ENCODE measurements at regions of chrX and their contacts with region 1.

Region 1: GRCh38 chrX:11698702-11699101 is 33.0 kb upstream of the ARHGAP6 start:
- DNase-seq: no peak
- ATAC-seq: no peak
- H3K4me3 ChIP-seq: no peak overlapping the region
- H3K27ac ChIP-seq: no peak overlapping the region
- H3K4me1 ChIP-seq: no peaks in the 10 kb centered on the region
- H3K27me3 ChIP-seq: no peaks in the 10 kb centered on the region
- CTCF ChIP-seq: no peak
- EP300 ChIP-seq: no peak
- POLR2A ChIP-seq: no peak
- RAD21 ChIP-seq: no peak

Region 2: DNA sequence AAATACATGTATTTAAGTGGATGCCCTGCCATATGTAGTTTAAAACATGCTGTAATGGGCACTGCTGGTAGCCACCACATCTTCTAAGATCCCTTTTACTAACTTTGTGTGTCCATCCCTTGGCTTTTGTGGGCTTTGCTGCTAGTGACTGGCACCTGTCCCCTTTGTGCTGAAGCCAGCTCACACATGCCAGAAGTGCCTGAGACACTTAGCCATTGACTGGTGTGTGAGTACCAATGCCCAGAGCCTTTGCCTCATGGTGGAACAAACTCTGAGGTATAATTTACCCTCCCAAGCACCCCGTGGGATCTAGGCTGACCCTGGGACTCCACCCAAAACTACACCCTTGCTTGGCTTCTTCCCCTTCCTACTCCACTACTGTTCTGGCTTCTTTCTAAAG is 66.0 kb before region 1 on chrX:
- CTCF ChIA-PET with region 1: no interaction called
- POLR2A ChIA-PET with region 1: no interaction called
- in situ Hi-C with region 1: no loop called
- intact Hi-C with region 1: loop called (anchors 2 kb)
- DNase-seq: no peak
- ATAC-seq: no peak
- H3K4me3 ChIP-seq: no peak overlapping the region
- H3K27ac ChIP-seq: no peak overlapping the region
- H3K4me1 ChIP-seq: no peaks in the 10 kb centered on the region
- H3K27me3 ChIP-seq: no peaks in the 10 kb centered on the region
- CTCF ChIP-seq: no peak
- EP300 ChIP-seq: no peak
- POLR2A ChIP-seq: no peak
- RAD21 ChIP-seq: no peak

Measured in HepG2 (cell line).